IMR-90 (cell line): ENCODE measurements at regions of chr6 and their contacts with region 1.

Region 1: GRCh38 chr6:9801249-9801754 is 613.6 kb downstream of the TFAP2A start:
- DNase-seq: peak; percentile 82
- ATAC-seq: peak; percentile 93
- H3K4me3 ChIP-seq: no peak overlapping the region
- H3K27ac ChIP-seq: peak overlapping the region; percentile 46; the same call in 1 of the 2 replicates
- H3K4me1 ChIP-seq: peaks cover 2% of the 10 kb centered on the region; the same call in 1 of the 2 replicates
- H3K27me3 ChIP-seq: no peaks in the 10 kb centered on the region
- CTCF ChIP-seq: no peak
- POLR2A ChIP-seq: no peak
- RAD21 ChIP-seq: no peak

Region 2: GRCh38 chr6:9766240-9766915 is 34.9 kb before region 1 on chr6:
- CTCF ChIA-PET with region 1: no interaction called
- POLR2A ChIA-PET with region 1: no interaction called
- dilution Hi-C with region 1: no loop called
- in situ Hi-C with region 1: no loop called
- intact Hi-C with region 1: no loop called
- DNase-seq: peak; percentile 86
- ATAC-seq: peak; percentile 86
- H3K4me3 ChIP-seq: no peak overlapping the region
- H3K27ac ChIP-seq: peak overlapping the region; percentile 44; the same call in 1 of the 2 replicates
- H3K4me1 ChIP-seq: no peaks in the 10 kb centered on the region; the same call in 1 of the 2 replicates
- H3K27me3 ChIP-seq: no peaks in the 10 kb centered on the region
- CTCF ChIP-seq: no peak
- POLR2A ChIP-seq: no peak
- RAD21 ChIP-seq: no peak

Region 3: GRCh38 chr6:9890469-9890868 is 89.2 kb after region 1 on chr6:
- CTCF ChIA-PET with region 1: no interaction called
- POLR2A ChIA-PET with region 1: no interaction called
- dilution Hi-C with region 1: no loop called
- in situ Hi-C with region 1: no loop called
- intact Hi-C with region 1: no loop called
- DNase-seq: no peak
- ATAC-seq: no peak
- H3K4me3 ChIP-seq: no peak overlapping the region
- H3K27ac ChIP-seq: no peak overlapping the region
- H3K4me1 ChIP-seq: no peaks in the 10 kb centered on the region
- H3K27me3 ChIP-seq: no peaks in the 10 kb centered on the region
- CTCF ChIP-seq: no peak
- POLR2A ChIP-seq: no peak
- RAD21 ChIP-seq: no peak

Region 4: DNA sequence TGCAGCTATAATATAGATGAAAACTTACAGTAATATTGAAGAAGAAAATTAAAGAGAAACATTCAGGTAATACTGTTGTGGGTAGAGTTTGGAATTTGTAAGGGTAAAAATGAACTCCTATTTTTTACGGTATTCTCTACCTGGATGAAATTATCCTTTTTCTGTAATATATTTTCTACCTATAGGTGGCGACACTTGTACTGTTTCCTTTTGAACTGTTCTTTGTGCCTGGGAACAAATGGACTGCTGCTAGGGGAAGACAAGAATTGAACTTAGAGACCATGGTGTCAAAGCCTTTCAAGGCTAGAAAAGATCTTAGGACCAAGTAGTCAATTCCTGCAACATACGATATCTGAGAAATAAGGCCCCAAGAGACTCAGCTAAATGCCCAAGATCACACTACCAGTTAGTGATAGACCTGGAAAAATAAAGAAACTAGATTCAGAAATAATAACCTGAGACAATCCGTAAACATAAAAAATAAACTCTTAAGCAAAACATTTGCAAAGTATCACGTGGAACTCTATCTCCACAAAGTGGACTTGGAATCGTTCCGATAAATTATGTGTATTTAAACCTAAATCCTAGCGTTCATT is 229.7 kb after region 1 on chr6:
- CTCF ChIA-PET with region 1: no interaction called
- POLR2A ChIA-PET with region 1: no interaction called
- dilution Hi-C with region 1: no loop called
- in situ Hi-C with region 1: no loop called
- intact Hi-C with region 1: no loop called
- DNase-seq: no peak
- ATAC-seq: no peak
- H3K4me3 ChIP-seq: no peak overlapping the region
- H3K27ac ChIP-seq: no peak overlapping the region
- H3K4me1 ChIP-seq: no peaks in the 10 kb centered on the region
- H3K27me3 ChIP-seq: no peaks in the 10 kb centered on the region
- CTCF ChIP-seq: no peak
- POLR2A ChIP-seq: no peak
- RAD21 ChIP-seq: no peak

Region 5: GRCh38 chr6:10146723-10147451 is 345.6 kb after region 1 on chr6:
- CTCF ChIA-PET with region 1: no interaction called
- POLR2A ChIA-PET with region 1: no interaction called
- dilution Hi-C with region 1: no loop called
- in situ Hi-C with region 1: no loop called
- intact Hi-C with region 1: loop called (anchors 10 kb)
- DNase-seq: peak; percentile 8
- ATAC-seq: peak; percentile 82
- H3K4me3 ChIP-seq: peak overlapping the region; percentile 41; the same call in 1 of the 2 replicates
- H3K27ac ChIP-seq: no peak overlapping the region
- H3K4me1 ChIP-seq: no peaks in the 10 kb centered on the region
- H3K27me3 ChIP-seq: no peaks in the 10 kb centered on the region
- CTCF ChIP-seq: no peak
- POLR2A ChIP-seq: no peak
- RAD21 ChIP-seq: no peak